ENCODE measurements at regions of chr3 and their contacts with region 1.

Region 1: GRCh38 chr3:59212128-59212779 is 162.4 kb upstream of the CFAP20DC start:
- DNase-seq: peak; percentile 86
- ATAC-seq: peak; percentile 94
- H3K4me3 ChIP-seq: no peak overlapping the region
- H3K27ac ChIP-seq: peak overlapping the region; percentile 17
- H3K4me1 ChIP-seq: peaks cover 8% of the 10 kb centered on the region
- H3K27me3 ChIP-seq: no peaks in the 10 kb centered on the region
- CTCF ChIP-seq: peak; percentile 90

Region 2: DNA sequence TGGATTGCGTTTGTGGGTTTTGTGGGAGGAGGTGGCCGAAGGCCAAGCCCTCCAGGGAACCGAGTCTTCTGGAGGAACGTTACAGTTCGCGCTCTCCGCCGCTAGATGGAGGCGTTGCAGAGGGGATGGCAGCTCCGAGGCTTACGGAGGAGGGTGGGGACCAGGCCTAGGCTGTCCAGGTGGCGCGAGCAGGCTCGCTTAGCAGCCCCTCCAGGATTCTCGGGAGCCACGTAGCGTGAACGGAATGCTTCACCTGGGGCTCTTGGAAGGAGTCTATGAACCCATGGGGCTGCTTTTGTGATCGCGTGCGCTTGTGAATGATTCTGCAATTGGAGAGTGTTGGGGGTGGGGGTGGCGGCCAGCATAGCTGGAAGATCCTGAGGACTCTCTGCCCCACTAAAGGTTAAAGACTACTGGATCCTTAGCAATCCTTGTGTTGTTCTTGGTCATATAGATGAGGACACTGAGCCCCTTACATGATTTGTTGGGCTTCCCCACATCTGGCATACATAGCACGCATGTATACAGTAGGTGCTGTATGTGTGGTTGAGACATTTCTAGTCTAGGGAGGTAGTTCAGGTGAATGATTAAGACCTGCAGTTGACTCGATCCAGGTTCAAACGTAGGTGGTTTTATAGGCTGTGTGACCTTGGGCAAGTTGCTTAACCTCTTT is 571.4 kb before region 1 on chr3:
- CTCF ChIA-PET with region 1: no interaction called
- POLR2A ChIA-PET with region 1: no interaction called
- intact Hi-C with region 1: loop called (anchors 2 kb)
- DNase-seq: peak; percentile 92
- ATAC-seq: peak; percentile 94
- H3K4me3 ChIP-seq: no peak overlapping the region
- H3K27ac ChIP-seq: no peak overlapping the region
- H3K4me1 ChIP-seq: peaks cover 22% of the 10 kb centered on the region
- H3K27me3 ChIP-seq: no peaks in the 10 kb centered on the region
- CTCF ChIP-seq: peak; percentile 96

Region 3: GRCh38 chr3:59235634-59236012 is 23.4 kb after region 1 on chr3:
- CTCF ChIA-PET with region 1: no interaction called
- POLR2A ChIA-PET with region 1: no interaction called
- intact Hi-C with region 1: loop called (anchors 2 kb)
- DNase-seq: peak; percentile 26
- ATAC-seq: no peak
- H3K4me3 ChIP-seq: no peak overlapping the region
- H3K27ac ChIP-seq: no peak overlapping the region
- H3K4me1 ChIP-seq: peaks cover 39% of the 10 kb centered on the region
- H3K27me3 ChIP-seq: no peaks in the 10 kb centered on the region
- CTCF ChIP-seq: no peak

Region 4: DNA sequence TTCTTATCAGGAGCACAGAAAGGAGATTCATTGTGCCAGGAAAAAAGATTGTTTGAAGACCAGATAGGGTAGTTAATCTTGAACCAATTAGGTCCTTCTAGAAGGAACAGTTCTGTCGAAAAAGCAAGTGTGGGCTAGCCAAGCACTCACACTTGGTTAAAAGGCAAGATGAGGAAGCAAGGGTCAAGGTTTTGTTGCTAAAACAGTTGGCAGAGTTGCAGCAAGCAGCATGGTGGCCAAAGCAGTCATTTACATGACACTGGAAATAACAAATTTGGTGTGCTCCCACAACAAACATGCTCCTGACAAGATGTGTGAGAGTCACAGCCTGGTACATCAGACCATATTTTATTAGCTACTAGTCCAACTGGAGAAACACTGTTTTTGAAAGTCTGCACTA is 65.6 kb after region 1 on chr3:
- CTCF ChIA-PET with region 1: no interaction called
- POLR2A ChIA-PET with region 1: no interaction called
- intact Hi-C with region 1: loop called (anchors 2 kb)
- DNase-seq: no peak
- ATAC-seq: no peak
- H3K4me3 ChIP-seq: no peak overlapping the region
- H3K27ac ChIP-seq: no peak overlapping the region
- H3K4me1 ChIP-seq: peaks cover 23% of the 10 kb centered on the region
- H3K27me3 ChIP-seq: no peaks in the 10 kb centered on the region
- CTCF ChIP-seq: no peak

Region 5: DNA sequence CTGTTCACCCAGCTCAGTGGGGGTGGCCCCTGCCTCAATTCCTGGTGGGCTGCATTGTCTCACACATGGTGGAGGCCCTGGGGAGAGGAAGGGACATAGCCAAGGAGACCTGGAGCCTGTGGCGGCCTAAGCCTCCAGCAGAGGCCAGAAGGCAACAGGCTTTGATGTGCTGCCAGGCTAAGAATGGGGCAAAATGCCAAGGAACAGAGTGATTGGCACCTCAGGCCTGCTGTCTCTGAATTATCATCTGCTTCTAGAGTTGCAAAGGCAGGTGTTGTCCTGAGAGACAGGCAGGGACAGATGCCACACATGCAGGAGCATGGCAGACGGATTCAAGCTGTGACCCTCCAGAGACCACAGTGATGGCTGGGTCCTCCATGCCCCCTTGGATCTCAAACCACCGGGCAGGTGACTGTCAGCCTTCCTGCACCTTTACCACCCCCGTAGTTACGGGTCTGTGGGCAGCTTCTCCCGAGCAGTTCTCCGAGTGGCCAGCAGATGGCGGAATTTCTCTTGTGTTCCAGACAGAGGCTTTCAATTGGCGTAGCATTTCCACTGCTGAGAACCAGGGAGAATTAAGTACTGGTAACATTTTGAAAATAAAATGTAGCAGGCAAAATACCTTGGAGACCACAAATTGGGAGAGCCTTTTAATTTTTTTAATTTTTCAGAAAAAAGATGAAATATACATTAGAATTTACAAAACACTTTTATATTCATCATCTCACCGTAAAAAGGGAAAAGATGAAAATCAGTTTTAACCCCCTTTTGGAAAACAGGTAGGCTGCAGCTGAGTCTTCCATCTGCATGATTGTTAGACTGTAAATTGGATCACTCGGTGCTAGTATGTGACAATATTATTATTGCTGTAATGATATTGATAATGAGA is 363.1 kb after region 1 on chr3:
- CTCF ChIA-PET with region 1: no interaction called
- POLR2A ChIA-PET with region 1: no interaction called
- intact Hi-C with region 1: loop called (anchors 1 kb)
- DNase-seq: peak; percentile 92
- ATAC-seq: peak; percentile 75
- H3K4me3 ChIP-seq: no peak overlapping the region
- H3K27ac ChIP-seq: no peak overlapping the region
- H3K4me1 ChIP-seq: peaks cover 22% of the 10 kb centered on the region
- H3K27me3 ChIP-seq: no peaks in the 10 kb centered on the region
- CTCF ChIP-seq: peak; percentile 97

Region 6: GRCh38 chr3:59809710-59810444 is 597.6 kb after region 1 on chr3:
- CTCF ChIA-PET with region 1: no interaction called
- POLR2A ChIA-PET with region 1: no interaction called
- intact Hi-C with region 1: loop called (anchors 1 kb)
- DNase-seq: peak; percentile 64
- ATAC-seq: peak; percentile 50
- H3K4me3 ChIP-seq: no peak overlapping the region
- H3K27ac ChIP-seq: no peak overlapping the region
- H3K4me1 ChIP-seq: peaks cover 10% of the 10 kb centered on the region; the same call in 1 of the 2 replicates
- H3K27me3 ChIP-seq: no peaks in the 10 kb centered on the region
- CTCF ChIP-seq: peak; percentile 66